K562 (cell line): ENCODE measurements at regions of chr2 and their contacts with region 1.

Region 1: GRCh38 chr2:169221745-169222369 is 140.5 kb downstream of the LRP2 start:
- DNase-seq: peak; percentile 24 to 71 (median 42)
- ATAC-seq: peak; percentile 87
- H3K4me3 ChIP-seq: no peak overlapping the region
- H3K27ac ChIP-seq: no peak overlapping the region
- H3K4me1 ChIP-seq: peaks cover 0 to 2% of the 10 kb centered on the region in 2 experiments; a peak in 1 of 5 replicates
- H3K27me3 ChIP-seq: no peaks in the 10 kb centered on the region
- CTCF ChIP-seq: peak; percentile 57 to 84 (median 63); a peak in 5 of 6 replicates
- EP300 ChIP-seq: no peak
- POLR2A ChIP-seq: no peak
- RAD21 ChIP-seq: peak; percentile 93 to 95

Region 2: DNA sequence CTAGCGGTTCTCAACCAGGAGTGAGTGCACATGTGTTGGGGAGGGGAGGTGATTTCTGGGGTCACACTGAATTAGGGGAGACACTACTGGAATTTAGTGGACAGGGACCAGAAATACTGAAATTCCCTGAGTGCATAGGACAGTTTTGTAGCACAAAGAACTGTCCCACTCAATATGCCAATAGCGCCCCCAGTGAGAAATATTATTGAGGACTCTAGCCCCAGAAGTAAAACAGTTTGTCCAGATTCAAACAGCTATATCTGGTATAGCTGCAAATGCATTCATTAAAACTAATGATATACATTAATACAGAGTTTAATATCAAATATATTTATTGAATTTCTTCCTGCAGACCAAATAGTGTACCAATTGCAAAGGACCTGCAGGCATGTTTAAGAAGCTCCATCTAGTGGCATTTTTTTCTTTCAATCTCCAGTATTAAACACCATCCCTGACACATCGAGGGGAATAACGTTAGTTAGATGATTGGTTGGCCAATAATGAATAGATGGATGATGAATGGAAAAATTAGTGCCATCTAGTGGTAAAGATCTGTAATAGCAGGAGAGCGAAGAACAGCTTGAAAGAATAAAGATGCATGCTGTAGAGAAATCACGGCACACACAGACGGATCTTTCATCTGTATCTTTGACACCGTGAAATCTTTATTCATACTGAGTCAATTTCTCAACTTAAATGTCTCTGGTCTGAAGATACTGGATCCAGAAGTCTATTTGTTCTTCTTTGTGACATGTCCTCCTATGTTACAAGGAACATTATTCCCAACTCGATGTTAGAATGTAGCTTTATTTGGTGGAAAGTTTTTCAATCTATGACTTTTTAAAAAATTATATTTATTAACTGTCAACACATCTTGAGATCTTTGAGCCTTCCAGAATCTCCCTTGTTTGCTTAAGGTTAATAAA is 90.0 kb before region 1 on chr2:
- CTCF ChIA-PET with region 1: no interaction called
- POLR2A ChIA-PET with region 1: interaction called, 3 read pairs
- in situ Hi-C with region 1: no loop called
- intact Hi-C with region 1: loop called (anchors 5 kb)
- DNase-seq: peak; percentile 58 to 76 (median 70)
- ATAC-seq: peak; percentile 14; the same call in 2 of the 3 replicates
- H3K4me3 ChIP-seq: no peak overlapping the region
- H3K27ac ChIP-seq: no peak overlapping the region
- H3K4me1 ChIP-seq: peaks cover 13 to 41% of the 10 kb centered on the region in 2 experiments
- H3K27me3 ChIP-seq: no peaks in the 10 kb centered on the region
- CTCF ChIP-seq: peak; percentile 51 to 83 (median 76); a peak in 5 of 6 replicates
- EP300 ChIP-seq: no peak
- POLR2A ChIP-seq: no peak
- RAD21 ChIP-seq: peak; percentile 59 to 66

Region 3: DNA sequence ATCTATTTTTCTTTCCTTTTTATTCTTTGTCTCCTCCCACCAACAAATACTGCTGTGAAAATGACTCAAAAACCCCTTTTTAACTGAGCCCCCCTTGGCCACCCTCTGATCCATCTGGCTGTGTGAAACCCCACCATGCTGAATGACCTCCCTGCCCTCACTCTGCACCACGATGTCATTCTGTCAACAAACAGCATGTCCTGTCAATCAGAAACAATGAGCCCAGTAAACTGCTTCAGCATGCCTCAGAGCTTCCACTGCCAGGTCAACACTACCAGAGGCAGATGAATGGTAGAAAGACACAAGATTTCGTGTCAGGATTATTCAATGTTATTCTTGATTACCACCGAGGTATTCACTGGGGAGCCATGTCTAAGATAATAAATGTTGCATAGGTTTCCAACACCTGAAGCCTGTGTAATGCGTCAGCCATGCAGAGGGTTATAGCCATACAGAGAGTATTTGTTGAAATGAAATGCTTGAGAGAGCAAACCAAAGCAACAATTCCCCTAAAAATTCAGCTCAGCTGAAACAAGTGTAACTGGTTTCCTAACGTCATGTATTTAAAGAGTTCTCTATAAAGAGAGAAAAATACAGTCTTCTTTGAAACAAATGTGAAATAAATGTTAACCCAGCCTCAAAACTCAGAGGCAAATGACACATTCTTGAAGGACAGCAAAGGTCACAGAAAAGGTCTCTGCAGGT is 63.8 kb after region 1 on chr2:
- CTCF ChIA-PET with region 1: no interaction called
- POLR2A ChIA-PET with region 1: no interaction called
- in situ Hi-C with region 1: no loop called
- intact Hi-C with region 1: no loop called
- DNase-seq: no peak
- ATAC-seq: no peak; the same call in 2 of the 3 replicates
- H3K4me3 ChIP-seq: no peak overlapping the region
- H3K27ac ChIP-seq: no peak overlapping the region
- H3K4me1 ChIP-seq: no peaks in the 10 kb centered on the region
- H3K27me3 ChIP-seq: peaks cover 4 to 9% of the 10 kb centered on the region in 2 experiments; a peak in 2 of 5 replicates
- CTCF ChIP-seq: no peak
- EP300 ChIP-seq: no peak
- POLR2A ChIP-seq: no peak
- RAD21 ChIP-seq: no peak

Region 4: DNA sequence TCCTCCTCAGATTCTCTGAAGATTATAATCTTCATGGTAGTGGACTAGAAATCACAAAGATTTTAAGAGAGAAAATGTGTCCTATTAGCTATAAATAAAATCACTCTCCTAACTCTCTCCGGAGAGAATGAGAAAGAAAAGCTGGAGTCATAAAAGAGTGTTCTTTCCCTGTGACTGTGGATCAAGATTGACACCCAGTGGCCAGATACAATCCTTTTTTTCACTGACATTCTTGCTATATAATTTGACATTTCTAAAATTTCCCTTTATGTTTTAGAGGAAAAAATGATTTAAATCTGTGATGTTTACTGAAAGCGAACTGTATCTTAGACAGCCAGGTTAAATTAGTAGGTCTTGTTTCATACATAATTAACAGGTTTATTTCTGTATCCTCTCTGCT is 175.8 kb after region 1 on chr2:
- CTCF ChIA-PET with region 1: no interaction called
- POLR2A ChIA-PET with region 1: no interaction called
- in situ Hi-C with region 1: no loop called
- intact Hi-C with region 1: loop called (anchors 10 kb)
- DNase-seq: peak in 3 of 4 experiments; percentile 16 to 34 (median 32)
- ATAC-seq: peak; percentile 57; the same call in 1 of the 3 replicates
- H3K4me3 ChIP-seq: no peak overlapping the region
- H3K27ac ChIP-seq: no peak overlapping the region
- H3K4me1 ChIP-seq: peaks cover 0 to 6% of the 10 kb centered on the region in 2 experiments; a peak in 2 of 5 replicates
- H3K27me3 ChIP-seq: peaks cover 4 to 19% of the 10 kb centered on the region in 2 experiments
- CTCF ChIP-seq: peak in 2 of 3 experiments; percentile 30 to 57; a peak in 2 of 6 replicates
- EP300 ChIP-seq: no peak
- POLR2A ChIP-seq: no peak
- RAD21 ChIP-seq: peak; percentile 64 to 81